Activated CD4-positive, alpha-beta memory T cell treated with anti-CD3 and anti-CD28 coated beads for 36 hours (primary cell): ENCODE measurements at regions of chr6 and their contacts with region 1.

Region 1: GRCh38 chr6:5398530-5398929 is 137.2 kb downstream of the FARS2 start:
- DNase-seq: peak; percentile 60
- H3K4me3 Mint-ChIP-seq: no peak overlapping the region
- H3K27ac Mint-ChIP-seq: no peak overlapping the region
- H3K4me1 Mint-ChIP-seq: peaks cover 35% of the 10 kb centered on the region
- H3K27me3 Mint-ChIP-seq: no peaks in the 10 kb centered on the region

Region 2: DNA sequence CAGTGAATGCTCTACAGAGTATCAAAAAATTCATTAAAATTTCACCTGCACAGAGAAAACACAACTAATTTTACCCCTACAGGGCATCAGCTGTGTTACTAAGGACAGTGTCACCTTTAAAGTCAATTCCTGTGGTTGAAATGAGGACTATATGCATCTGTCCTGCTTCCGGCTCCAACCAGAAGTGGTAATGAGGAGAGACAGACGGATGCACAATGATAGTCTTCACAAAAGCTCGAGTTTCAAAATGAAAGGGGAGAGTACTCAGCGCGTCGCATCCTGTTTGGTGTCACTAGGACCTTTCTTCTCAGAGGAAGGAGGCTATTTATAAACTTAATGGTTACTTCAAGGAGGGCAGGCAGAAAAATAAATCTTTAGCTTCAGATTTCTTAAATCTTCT is 224.3 kb before region 1 on chr6:
- CTCF ChIA-PET with region 1: interaction called, 4 read pairs
- POLR2A ChIA-PET with region 1: no interaction called
- intact Hi-C with region 1: loop called (anchors 1 kb)
- DNase-seq: peak; percentile 78
- H3K4me3 Mint-ChIP-seq: peak overlapping the region; percentile 27
- H3K27ac Mint-ChIP-seq: peak overlapping the region; percentile 71
- H3K4me1 Mint-ChIP-seq: peaks cover 40% of the 10 kb centered on the region
- H3K27me3 Mint-ChIP-seq: no peaks in the 10 kb centered on the region

Region 3: GRCh38 chr6:5214570-5215052 is 183.9 kb before region 1 on chr6:
- CTCF ChIA-PET with region 1: no interaction called
- POLR2A ChIA-PET with region 1: no interaction called
- intact Hi-C with region 1: loop called (anchors 5 kb)
- DNase-seq: peak; percentile 58
- H3K4me3 Mint-ChIP-seq: no peak overlapping the region
- H3K27ac Mint-ChIP-seq: no peak overlapping the region
- H3K4me1 Mint-ChIP-seq: peaks cover 4% of the 10 kb centered on the region
- H3K27me3 Mint-ChIP-seq: no peaks in the 10 kb centered on the region

Region 4: DNA sequence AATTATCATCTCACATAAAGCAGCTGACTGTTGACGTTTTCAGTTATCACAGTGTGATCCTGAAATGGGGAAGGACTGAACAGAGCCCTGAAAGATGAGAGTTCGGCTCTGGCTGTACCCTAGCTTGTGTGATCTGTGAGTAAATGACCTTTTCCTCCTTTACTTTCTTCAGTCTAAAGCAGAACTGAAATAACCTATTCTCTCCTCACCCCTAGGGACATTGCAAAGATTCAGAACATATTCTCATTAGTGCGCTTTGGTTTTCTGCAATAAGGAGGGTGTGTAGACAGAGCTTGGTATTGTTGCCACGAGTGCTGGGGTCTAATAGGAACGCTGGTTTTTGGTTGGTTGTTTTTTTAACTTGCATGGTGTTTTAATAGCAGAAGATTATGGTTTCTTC is 120.5 kb before region 1 on chr6:
- CTCF ChIA-PET with region 1: interaction called, 3 read pairs
- POLR2A ChIA-PET with region 1: no interaction called
- intact Hi-C with region 1: loop called (anchors 1 kb)
- DNase-seq: no peak
- H3K4me3 Mint-ChIP-seq: no peak overlapping the region
- H3K27ac Mint-ChIP-seq: peak overlapping the region; percentile 55
- H3K4me1 Mint-ChIP-seq: peaks cover 76% of the 10 kb centered on the region
- H3K27me3 Mint-ChIP-seq: no peaks in the 10 kb centered on the region